ENCODE measurements at regions of chr11 and their contacts with region 1.

Region 1: GRCh38 chr11:73965076-73965860 is 14.4 kb downstream of the DNAJB13 start:
- DNase-seq: no peak
- H3K4me3 ChIP-seq: no peak overlapping the region
- H3K4me3 Mint-ChIP-seq: no peak overlapping the region
- H3K27ac ChIP-seq: no peak overlapping the region
- H3K27ac Mint-ChIP-seq: peak overlapping the region in 2 of 8 donors; percentile 27 to 69
- H3K4me1 ChIP-seq: peaks cover 53% of the 10 kb centered on the region
- H3K4me1 Mint-ChIP-seq: peaks cover 34 to 52% (median 44%) of the 10 kb centered on the region in 3 donors
- H3K27me3 ChIP-seq: no peaks in the 10 kb centered on the region
- H3K27me3 Mint-ChIP-seq: no peaks in the 10 kb centered on the region

Region 2: DNA sequence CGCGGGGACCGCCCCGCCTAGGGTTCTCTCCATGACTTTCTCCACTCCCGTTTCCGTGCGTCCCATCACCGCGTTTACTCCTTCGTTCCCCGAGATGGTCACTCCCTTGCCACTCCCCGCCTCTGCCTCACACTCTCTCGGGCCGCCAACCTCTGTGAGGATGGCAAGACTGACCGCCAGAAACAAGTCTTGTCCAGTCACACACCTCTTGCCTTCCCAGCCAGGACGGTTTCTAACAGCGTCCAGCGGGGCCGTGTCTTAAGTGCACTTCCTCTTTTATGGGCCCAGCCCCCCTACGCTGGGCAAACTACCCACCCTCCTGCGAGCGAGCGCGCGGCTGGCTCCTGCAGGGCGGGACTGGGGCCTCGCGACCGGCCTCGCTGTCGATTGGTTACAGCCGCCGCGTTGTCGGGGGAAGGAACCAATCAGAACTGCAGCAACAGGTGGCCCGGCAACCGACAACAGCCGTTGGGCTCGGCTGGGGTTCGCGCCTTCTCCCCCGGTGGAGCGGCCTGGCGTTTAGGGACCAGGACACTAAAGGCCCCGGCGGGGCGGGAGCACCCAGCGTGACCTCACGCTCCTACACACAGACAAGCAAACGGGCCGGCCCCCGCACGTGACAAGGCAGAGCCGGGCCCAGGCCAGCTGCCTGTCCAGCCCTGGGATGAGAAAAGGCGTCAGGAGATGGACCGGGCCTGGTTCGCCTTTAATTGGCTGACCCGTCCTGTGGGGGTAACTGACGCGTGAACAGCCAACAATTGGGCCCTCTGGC is 17.9 kb after region 1 on chr11:
- CTCF ChIA-PET with region 1: interaction called, 48 read pairs
- POLR2A ChIA-PET with region 1: interaction called, 150 read pairs
- DNase-seq: peak; percentile 88 to 96 (median 91)
- H3K4me3 ChIP-seq: peak overlapping the region; percentile 97
- H3K4me3 Mint-ChIP-seq: peak overlapping the region; percentile 98 to 100 (median 99)
- H3K27ac ChIP-seq: peak overlapping the region; percentile 95
- H3K27ac Mint-ChIP-seq: peak overlapping the region; percentile 94 to 100 (median 100)
- H3K4me1 ChIP-seq: peaks cover 39% of the 10 kb centered on the region
- H3K4me1 Mint-ChIP-seq: peaks cover 38 to 50% (median 41%) of the 10 kb centered on the region in 3 donors
- H3K27me3 ChIP-seq: no peaks in the 10 kb centered on the region
- H3K27me3 Mint-ChIP-seq: peaks cover 0 to 4% of the 10 kb centered on the region in 2 donors

Region 3: DNA sequence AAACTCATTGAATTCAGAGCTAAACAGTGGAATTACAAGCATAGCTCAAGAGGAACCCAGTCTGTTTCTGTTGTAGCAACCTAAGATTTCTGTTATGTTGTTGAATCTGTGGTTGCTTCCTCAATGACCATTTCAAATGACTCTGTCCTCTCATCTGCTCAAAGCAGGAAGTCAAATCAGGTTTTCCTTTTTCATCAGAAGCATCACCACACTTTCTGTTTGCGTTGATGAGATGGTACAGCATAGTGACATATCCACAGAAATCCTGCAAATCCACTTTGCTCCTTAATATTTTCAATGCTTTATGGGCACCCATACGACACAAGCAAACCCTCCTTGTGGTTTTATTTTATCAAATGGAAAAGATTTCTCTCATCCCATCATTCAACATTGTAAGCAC is 30.0 kb after region 1 on chr11:
- CTCF ChIA-PET with region 1: interaction called, 9 read pairs
- POLR2A ChIA-PET with region 1: interaction called, 11 read pairs
- DNase-seq: peak in 3 of 5 donors; percentile 49 to 89 (median 82)
- H3K4me3 ChIP-seq: peak overlapping the region; percentile 49
- H3K4me3 Mint-ChIP-seq: peak overlapping the region; percentile 55 to 86 (median 74)
- H3K27ac ChIP-seq: peak overlapping the region; percentile 93
- H3K27ac Mint-ChIP-seq: peak overlapping the region; percentile 93 to 99 (median 98)
- H3K4me1 ChIP-seq: peaks cover 60% of the 10 kb centered on the region
- H3K4me1 Mint-ChIP-seq: peaks cover 41 to 79% (median 71%) of the 10 kb centered on the region in 3 donors
- H3K27me3 ChIP-seq: no peaks in the 10 kb centered on the region
- H3K27me3 Mint-ChIP-seq: no peaks in the 10 kb centered on the region

Region 4: GRCh38 chr11:74004759-74005615 is 39.7 kb after region 1 on chr11:
- CTCF ChIA-PET with region 1: interaction called, 11 read pairs
- POLR2A ChIA-PET with region 1: interaction called, 15 read pairs
- DNase-seq: peak; percentile 75 to 93 (median 87)
- H3K4me3 ChIP-seq: peak overlapping the region; percentile 39
- H3K4me3 Mint-ChIP-seq: peak overlapping the region; percentile 53 to 88 (median 75)
- H3K27ac ChIP-seq: peak overlapping the region; percentile 52
- H3K27ac Mint-ChIP-seq: peak overlapping the region; percentile 83 to 99 (median 92)
- H3K4me1 ChIP-seq: peaks cover 68% of the 10 kb centered on the region
- H3K4me1 Mint-ChIP-seq: peaks cover 64 to 81% (median 73%) of the 10 kb centered on the region in 3 donors
- H3K27me3 ChIP-seq: no peaks in the 10 kb centered on the region
- H3K27me3 Mint-ChIP-seq: peaks cover 0 to under 1% of the 10 kb centered on the region in 2 donors

Region 5: DNA sequence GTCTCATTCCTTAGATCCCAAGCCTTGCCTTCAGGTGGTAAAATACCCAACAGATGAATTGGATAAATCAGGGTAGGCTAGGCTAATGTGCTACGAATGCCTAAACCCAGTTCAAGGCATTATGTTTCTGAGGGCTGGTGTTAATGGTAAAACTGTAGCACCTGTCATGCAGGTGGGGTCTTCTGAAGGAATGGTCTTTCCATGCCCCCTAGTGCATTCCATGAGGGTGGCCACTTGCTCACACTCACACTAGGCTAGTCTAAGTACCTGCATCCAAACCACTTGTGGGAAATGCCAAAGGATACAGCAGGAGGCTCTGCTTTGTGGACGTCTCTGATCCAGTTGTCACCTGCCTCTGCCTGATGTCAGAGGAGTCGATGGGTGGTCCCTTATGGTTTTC is 67.8 kb after region 1 on chr11:
- CTCF ChIA-PET with region 1: interaction called, 17 read pairs
- POLR2A ChIA-PET with region 1: no interaction called
- DNase-seq: peak in 1 of 5 donors; percentile 54
- H3K4me3 ChIP-seq: no peak overlapping the region
- H3K4me3 Mint-ChIP-seq: no peak overlapping the region
- H3K27ac ChIP-seq: no peak overlapping the region
- H3K27ac Mint-ChIP-seq: peak overlapping the region in 6 of 8 donors; percentile 24 to 76 (median 48)
- H3K4me1 ChIP-seq: peaks cover 15% of the 10 kb centered on the region
- H3K4me1 Mint-ChIP-seq: peaks cover 23 to 33% (median 31%) of the 10 kb centered on the region in 3 donors
- H3K27me3 ChIP-seq: no peaks in the 10 kb centered on the region
- H3K27me3 Mint-ChIP-seq: no peaks in the 10 kb centered on the region

Region 6: GRCh38 chr11:74473382-74474173 is 508.3 kb after region 1 on chr11:
- CTCF ChIA-PET with region 1: no interaction called
- POLR2A ChIA-PET with region 1: no interaction called
- DNase-seq: no peak
- H3K4me3 ChIP-seq: no peak overlapping the region
- H3K4me3 Mint-ChIP-seq: no peak overlapping the region
- H3K27ac ChIP-seq: no peak overlapping the region
- H3K27ac Mint-ChIP-seq: no peak overlapping the region
- H3K4me1 ChIP-seq: no peaks in the 10 kb centered on the region
- H3K4me1 Mint-ChIP-seq: no peaks in the 10 kb centered on the region
- H3K27me3 ChIP-seq: no peaks in the 10 kb centered on the region
- H3K27me3 Mint-ChIP-seq: peaks cover 17 to 40% of the 10 kb centered on the region in 2 donors